ENCODE measurements at regions of chr2 and their contacts with region 1.

Region 1: DNA sequence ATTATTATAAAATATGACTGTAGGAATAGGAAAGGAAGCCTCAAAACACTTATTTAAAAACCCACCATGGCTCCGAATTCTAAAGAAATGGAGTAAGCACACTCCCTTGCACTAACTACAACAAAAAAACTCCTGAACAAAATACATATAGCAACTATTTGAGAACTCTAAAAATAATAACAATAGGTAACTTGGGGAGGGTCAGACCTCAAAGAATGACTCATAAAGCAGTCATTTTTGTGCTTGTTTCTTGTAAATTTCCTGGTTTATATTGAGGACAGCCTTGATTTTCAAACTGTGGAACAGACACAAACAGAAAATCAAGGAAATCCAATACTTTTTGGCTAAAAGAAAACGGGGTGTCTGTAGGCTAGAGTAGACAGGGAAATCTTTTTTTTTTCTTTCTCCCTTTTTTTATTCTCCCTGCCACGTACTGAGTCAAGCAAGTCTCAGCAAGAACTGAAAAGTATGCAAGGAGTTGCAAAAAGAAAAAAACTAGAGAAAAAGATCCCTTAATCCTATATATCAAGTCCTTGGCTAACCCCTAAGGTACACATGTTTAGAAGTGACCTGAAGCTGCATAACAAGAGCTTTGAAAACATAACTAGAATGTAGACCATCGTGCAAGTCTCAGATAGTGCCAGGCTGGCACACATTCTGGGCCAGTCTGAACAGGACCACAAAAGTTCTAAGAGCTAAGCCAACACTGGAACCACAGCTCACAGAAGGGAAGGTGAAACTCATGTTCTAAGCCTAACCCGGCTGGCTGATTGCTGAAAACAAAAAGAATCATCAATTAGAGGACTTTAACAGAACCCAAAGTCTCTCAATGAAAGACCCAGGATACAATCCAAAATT is 403.1 kb upstream of the LYPD1 start:
- DNase-seq: no peak
- H3K4me3 Mint-ChIP-seq: peak overlapping the region; percentile 18
- H3K27ac Mint-ChIP-seq: peak overlapping the region; percentile 8
- H3K4me1 Mint-ChIP-seq: peaks cover 18% of the 10 kb centered on the region
- H3K27me3 Mint-ChIP-seq: no peaks in the 10 kb centered on the region
- CTCF ChIP-seq: no peak

Region 2: DNA sequence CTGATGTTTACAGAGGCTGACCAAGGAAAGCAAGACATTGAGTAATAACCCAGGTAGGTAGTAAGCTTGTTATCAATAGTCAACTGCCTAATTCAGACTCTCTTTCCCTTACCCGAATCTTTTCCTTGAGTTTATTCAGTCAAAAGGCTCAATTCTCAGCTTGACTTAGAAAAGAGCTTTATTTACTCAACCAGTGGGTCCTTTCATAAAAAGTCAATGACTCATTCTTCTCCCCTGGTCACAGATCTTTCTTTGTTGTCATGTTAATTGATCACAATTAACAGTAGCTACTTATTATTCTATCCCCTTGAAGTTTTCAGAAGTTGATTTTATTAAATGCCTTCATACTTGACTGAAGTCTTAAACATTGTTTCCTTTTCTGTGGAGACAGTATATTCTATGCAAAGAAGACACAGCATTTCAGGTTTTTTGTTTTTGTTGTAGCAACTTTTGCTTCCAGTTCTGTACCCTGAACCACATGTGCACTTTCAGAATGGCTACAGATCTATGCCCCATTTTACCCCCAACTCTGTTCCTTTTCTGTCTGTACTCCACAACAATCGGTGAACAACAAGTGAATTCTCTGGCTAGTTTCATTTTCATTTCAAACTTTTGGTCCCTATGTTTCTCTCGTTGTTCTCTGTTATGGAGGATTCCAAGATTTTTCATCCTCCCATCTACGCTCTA is 66.9 kb after region 1 on chr2:
- CTCF ChIA-PET with region 1: no interaction called
- intact Hi-C with region 1: loop called (anchors 5 kb)
- DNase-seq: no peak
- H3K4me3 Mint-ChIP-seq: no peak overlapping the region
- H3K27ac Mint-ChIP-seq: no peak overlapping the region
- H3K4me1 Mint-ChIP-seq: peaks cover 46% of the 10 kb centered on the region
- H3K27me3 Mint-ChIP-seq: no peaks in the 10 kb centered on the region
- CTCF ChIP-seq: no peak